ENCODE measurements at regions of chr5 and their contacts with region 1.

Region 1: DNA sequence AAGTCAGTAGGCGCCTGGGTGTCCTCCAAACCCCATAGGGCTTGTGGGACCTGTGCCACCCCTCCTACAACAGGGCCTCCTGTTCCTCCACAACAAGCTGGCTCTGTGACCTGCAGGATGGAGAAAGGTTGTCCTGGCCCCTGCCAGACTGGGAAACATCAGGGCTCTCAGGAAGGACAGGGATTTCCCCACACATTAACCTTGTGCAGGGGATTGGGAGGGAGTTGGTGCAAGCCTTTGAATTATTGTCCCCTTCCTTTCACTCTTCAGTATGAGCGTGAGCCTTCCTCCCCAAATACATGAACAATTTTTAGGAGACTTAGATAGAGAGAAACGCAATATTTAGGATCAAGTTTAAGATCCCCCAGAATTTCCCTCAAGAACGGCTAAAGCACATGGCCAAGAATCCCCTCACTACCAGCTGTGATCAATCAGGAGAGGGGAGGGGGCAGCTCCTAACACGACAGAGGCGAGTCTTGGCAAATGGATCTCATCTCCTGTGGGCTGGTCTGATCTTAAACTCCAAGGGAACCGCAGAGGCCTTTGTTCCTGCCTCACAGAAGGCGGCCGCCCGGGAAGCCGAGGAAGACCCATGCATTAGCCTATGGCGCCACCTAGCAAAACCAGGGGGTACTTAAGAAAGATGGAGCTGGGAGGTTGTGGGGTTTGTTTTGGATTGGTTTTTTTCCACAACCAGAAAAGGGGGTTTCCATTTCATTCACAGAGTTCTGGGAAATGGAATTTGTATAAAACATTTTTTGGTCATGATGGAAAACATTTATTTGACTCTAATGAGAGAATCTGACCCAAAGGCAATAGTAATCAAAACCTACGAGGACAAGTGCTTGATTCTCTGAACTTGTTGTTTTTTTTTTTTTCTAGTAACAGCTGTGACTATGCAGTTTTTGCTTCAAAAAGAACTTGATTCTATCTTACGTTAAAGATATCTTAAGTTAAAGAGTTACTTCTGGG is 36.1 kb upstream of the OSMR start:
- DNase-seq: peak; percentile 87
- H3K4me3 ChIP-seq: no peak overlapping the region
- H3K27ac ChIP-seq: peak overlapping the region; percentile 21 to 22; a peak in 3 of 4 replicates
- H3K4me1 ChIP-seq: peaks cover 15 to 21% of the 10 kb centered on the region in 2 experiments
- H3K27me3 ChIP-seq: no peaks in the 10 kb centered on the region
- CTCF ChIP-seq: peak; percentile 87
- EP300 ChIP-seq: 0 out of 4 replicates have a peak, but pooled peaks of 1 of the 2 experiments have one; percentile 8
- RAD21 ChIP-seq: peak; percentile 99

Region 2: GRCh38 chr5:38208782-38209378 is 600.8 kb before region 1 on chr5:
- CTCF ChIA-PET with region 1: interaction called, 14 read pairs
- POLR2A ChIA-PET with region 1: no interaction called
- DNase-seq: peak; percentile 51
- H3K4me3 ChIP-seq: no peak overlapping the region
- H3K27ac ChIP-seq: no peak overlapping the region
- H3K4me1 ChIP-seq: peaks cover 0 to 6% of the 10 kb centered on the region in 2 experiments; a peak in 2 of 4 replicates
- H3K27me3 ChIP-seq: no peaks in the 10 kb centered on the region
- CTCF ChIP-seq: peak; percentile 58
- EP300 ChIP-seq: no peak
- RAD21 ChIP-seq: peak; percentile 84

Region 3: DNA sequence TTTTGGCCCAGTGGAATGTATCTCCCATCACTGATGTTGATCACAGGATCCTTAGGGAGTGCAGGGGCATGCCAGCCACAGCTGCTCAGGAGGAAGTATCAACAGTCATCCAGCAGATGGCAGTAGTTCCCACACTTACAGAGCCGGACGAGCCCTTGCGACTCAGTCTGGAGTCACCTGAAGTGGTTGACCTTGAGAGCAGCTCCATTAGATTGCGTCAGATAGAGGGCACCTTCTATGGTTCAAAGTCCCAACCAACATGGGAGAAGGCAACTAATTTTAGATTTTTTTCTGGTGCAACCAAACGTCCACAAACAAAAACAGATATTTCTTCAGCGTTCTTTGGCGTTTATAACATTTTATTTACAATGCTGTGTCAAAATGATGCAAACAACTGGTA is 426.8 kb before region 1 on chr5:
- CTCF ChIA-PET with region 1: interaction called, 20 read pairs
- POLR2A ChIA-PET with region 1: no interaction called
- DNase-seq: peak; percentile 67
- H3K4me3 ChIP-seq: no peak overlapping the region; a peak in 1 of 4 replicates
- H3K27ac ChIP-seq: no peak overlapping the region
- H3K4me1 ChIP-seq: peaks cover 0 to 4% of the 10 kb centered on the region in 2 experiments; a peak in 2 of 4 replicates
- H3K27me3 ChIP-seq: peaks cover 10% of the 10 kb centered on the region; the same call in 1 of the 2 replicates
- CTCF ChIP-seq: peak; percentile 81
- EP300 ChIP-seq: no peak
- RAD21 ChIP-seq: peak; percentile 74

Region 4: GRCh38 chr5:38433160-38433861 is 376.4 kb before region 1 on chr5:
- CTCF ChIA-PET with region 1: interaction called, 39 read pairs
- POLR2A ChIA-PET with region 1: no interaction called
- DNase-seq: no peak
- H3K4me3 ChIP-seq: no peak overlapping the region
- H3K27ac ChIP-seq: peak overlapping the region in 1 of 2 experiments; percentile 25; a peak in 1 of 4 replicates
- H3K4me1 ChIP-seq: peaks cover 10% of the 10 kb centered on the region in 2 experiments; a peak in 2 of 4 replicates
- H3K27me3 ChIP-seq: no peaks in the 10 kb centered on the region
- CTCF ChIP-seq: no peak
- EP300 ChIP-seq: no peak
- RAD21 ChIP-seq: no peak

Region 5: DNA sequence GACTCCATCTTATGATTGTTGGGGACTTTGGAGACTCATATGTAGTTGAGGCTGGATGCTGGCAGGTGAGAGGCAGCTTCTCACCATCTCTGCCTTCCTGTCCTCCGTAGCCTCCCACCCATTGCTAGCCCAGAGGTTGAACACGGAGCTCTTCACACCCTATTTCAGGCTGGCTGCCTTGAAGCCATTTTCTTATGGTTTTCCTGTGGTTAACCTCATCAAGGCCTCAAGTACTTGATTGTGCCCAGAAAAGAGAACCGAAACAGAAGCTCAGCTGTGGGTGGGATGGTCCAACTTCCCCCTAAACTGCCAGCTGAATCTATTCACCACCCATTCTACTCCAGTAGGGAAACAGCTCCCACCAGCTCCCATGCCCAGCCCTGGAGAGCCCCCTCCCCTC is 356.2 kb before region 1 on chr5:
- CTCF ChIA-PET with region 1: interaction called, 31 read pairs
- POLR2A ChIA-PET with region 1: no interaction called
- DNase-seq: no peak
- H3K4me3 ChIP-seq: no peak overlapping the region
- H3K27ac ChIP-seq: no peak overlapping the region
- H3K4me1 ChIP-seq: peaks cover 0 to 10% of the 10 kb centered on the region in 2 experiments; a peak in 2 of 4 replicates
- H3K27me3 ChIP-seq: no peaks in the 10 kb centered on the region
- CTCF ChIP-seq: no peak
- EP300 ChIP-seq: no peak
- RAD21 ChIP-seq: no peak

Region 6: GRCh38 chr5:38831909-38832308 is 22.2 kb after region 1 on chr5:
- CTCF ChIA-PET with region 1: interaction called, 11 read pairs
- POLR2A ChIA-PET with region 1: no interaction called
- DNase-seq: peak; percentile 40
- H3K4me3 ChIP-seq: no peak overlapping the region
- H3K27ac ChIP-seq: no peak overlapping the region
- H3K4me1 ChIP-seq: peaks cover 0 to 16% of the 10 kb centered on the region in 2 experiments; a peak in 1 of 4 replicates
- H3K27me3 ChIP-seq: no peaks in the 10 kb centered on the region
- CTCF ChIP-seq: peak; percentile 52
- EP300 ChIP-seq: no peak
- RAD21 ChIP-seq: peak; percentile 31

Measured in SK-N-SH (cell line).